SK-N-SH (cell line): ENCODE measurements at regions of chr4 and their contacts with region 1.

Region 1: DNA sequence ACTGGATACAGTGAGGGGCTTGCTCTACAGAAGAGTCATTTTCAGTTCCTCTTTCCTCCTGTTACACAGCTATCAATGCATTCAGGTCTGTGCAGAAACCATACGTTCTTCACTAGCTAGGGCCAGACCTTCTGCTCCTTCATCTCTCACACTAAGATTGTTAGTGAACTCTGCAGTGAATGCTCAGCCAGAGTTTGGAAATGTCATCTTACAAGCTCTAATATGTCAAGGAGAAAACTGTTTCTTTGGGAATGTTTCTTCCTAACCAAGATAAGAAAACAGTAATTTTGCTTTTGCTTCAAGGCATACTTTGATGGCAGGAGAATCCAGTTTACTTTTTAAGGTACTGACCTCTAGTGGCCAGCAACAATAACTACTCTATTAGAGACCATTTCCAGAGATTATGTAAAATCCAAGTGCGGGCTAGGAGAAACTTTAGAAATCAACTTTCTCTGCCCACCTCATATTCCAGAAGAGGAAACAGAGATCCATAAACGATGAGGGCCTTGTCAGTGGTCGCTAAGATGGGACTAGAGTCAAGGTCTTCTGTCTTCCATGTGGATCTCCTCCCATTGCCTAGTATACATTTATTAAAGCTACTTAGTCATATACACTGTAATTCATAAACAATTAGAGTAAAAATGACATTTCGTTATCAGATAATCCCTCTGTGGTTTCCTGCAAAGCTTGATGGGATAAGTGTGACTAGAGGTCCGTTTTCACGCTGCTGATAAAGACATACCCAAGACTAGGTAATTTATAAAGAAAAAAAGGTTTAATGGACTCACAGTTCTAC is 12.1 kb upstream of the CC2D2A start:
- DNase-seq: peak; percentile 32
- H3K4me3 ChIP-seq: no peak overlapping the region; a peak in 1 of 4 replicates
- H3K27ac ChIP-seq: peak overlapping the region in 1 of 2 experiments; percentile 17; a peak in 1 of 4 replicates
- H3K4me1 ChIP-seq: peaks cover 3 to 4% of the 10 kb centered on the region in 2 experiments; a peak in 2 of 4 replicates
- H3K27me3 ChIP-seq: no peaks in the 10 kb centered on the region
- CTCF ChIP-seq: peak; percentile 83
- EP300 ChIP-seq: no peak
- RAD21 ChIP-seq: peak; percentile 89

Region 2: GRCh38 chr4:13654158-13654797 is 1803.3 kb before region 1 on chr4:
- CTCF ChIA-PET with region 1: interaction called, 13 read pairs
- POLR2A ChIA-PET with region 1: no interaction called
- DNase-seq: peak; percentile 62
- H3K4me3 ChIP-seq: peak overlapping the region; percentile 46 to 60
- H3K27ac ChIP-seq: peak overlapping the region in 1 of 2 experiments; percentile 14; a peak in 2 of 4 replicates
- H3K4me1 ChIP-seq: peaks cover 0 to 4% of the 10 kb centered on the region in 2 experiments; a peak in 1 of 4 replicates
- H3K27me3 ChIP-seq: no peaks in the 10 kb centered on the region; the same call in 1 of the 2 replicates
- CTCF ChIP-seq: peak; percentile 71
- EP300 ChIP-seq: no peak
- RAD21 ChIP-seq: peak; percentile 66

Region 3: GRCh38 chr4:15238720-15239119 is 218.9 kb before region 1 on chr4:
- CTCF ChIA-PET with region 1: interaction called, 61 read pairs
- POLR2A ChIA-PET with region 1: no interaction called
- DNase-seq: peak; percentile 65
- H3K4me3 ChIP-seq: no peak overlapping the region
- H3K27ac ChIP-seq: no peak overlapping the region
- H3K4me1 ChIP-seq: peaks cover 2 to 25% of the 10 kb centered on the region in 2 experiments; a peak in 3 of 4 replicates
- H3K27me3 ChIP-seq: no peaks in the 10 kb centered on the region
- CTCF ChIP-seq: peak; percentile 67
- EP300 ChIP-seq: no peak
- RAD21 ChIP-seq: peak; percentile 90

Region 4: DNA sequence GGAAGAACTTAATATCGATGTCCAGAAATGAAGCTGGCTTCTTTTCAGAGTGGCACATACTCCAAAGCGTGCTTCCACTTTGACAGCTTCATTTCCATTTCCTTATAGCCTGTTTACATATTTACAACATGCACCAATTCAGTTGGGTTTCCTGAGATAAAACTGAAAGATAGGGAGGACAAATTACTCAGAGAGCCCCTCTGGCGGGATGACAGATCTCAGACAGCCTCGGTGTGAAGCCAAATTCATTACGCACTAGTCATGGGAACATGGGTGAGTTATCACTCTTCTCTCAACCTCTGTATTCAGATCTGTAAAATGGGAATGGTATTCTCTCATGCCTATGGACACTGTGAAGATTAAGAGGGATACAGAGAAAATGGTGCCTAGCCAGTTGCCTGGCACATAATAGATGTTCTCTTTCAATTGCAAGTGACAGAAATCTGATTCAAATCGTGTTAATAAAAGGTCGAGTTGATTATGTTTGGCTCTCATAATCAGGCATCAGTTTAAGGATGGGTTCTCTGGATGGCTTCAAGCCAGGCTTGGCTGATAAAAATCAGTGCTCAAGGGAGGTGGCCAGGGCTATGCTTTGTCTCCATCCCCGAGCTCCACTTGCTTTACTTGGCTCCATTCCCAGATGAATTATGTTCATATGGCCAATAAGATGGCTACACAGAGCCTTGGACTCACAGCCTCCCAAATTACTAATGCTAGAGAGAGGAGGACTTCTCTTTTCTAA is 162.0 kb before region 1 on chr4:
- CTCF ChIA-PET with region 1: interaction called, 17 read pairs
- POLR2A ChIA-PET with region 1: no interaction called
- DNase-seq: peak; percentile 51
- H3K4me3 ChIP-seq: no peak overlapping the region
- H3K27ac ChIP-seq: peak overlapping the region in 1 of 2 experiments; percentile 75; a peak in 2 of 4 replicates
- H3K4me1 ChIP-seq: peaks cover 23% of the 10 kb centered on the region in 2 experiments; a peak in 3 of 4 replicates
- H3K27me3 ChIP-seq: no peaks in the 10 kb centered on the region
- CTCF ChIP-seq: no peak
- EP300 ChIP-seq: peak; percentile 43 to 92; a peak in 3 of 4 replicates
- RAD21 ChIP-seq: peak; percentile 27; the same call in 1 of the 2 replicates

Region 5: GRCh38 chr4:15427161-15427560 is 30.4 kb before region 1 on chr4:
- CTCF ChIA-PET with region 1: interaction called, 11 read pairs
- POLR2A ChIA-PET with region 1: no interaction called
- DNase-seq: no peak
- H3K4me3 ChIP-seq: no peak overlapping the region
- H3K27ac ChIP-seq: no peak overlapping the region
- H3K4me1 ChIP-seq: no peaks in the 10 kb centered on the region
- H3K27me3 ChIP-seq: no peaks in the 10 kb centered on the region
- CTCF ChIP-seq: no peak
- EP300 ChIP-seq: no peak
- RAD21 ChIP-seq: no peak

Region 6: GRCh38 chr4:15469402-15470127 is 12.0 kb after region 1 on chr4 and contains the start of gene CC2D2A:
- CTCF ChIA-PET with region 1: interaction called, 61 read pairs
- POLR2A ChIA-PET with region 1: no interaction called
- DNase-seq: peak; percentile 42
- H3K4me3 ChIP-seq: peak within 1 kb of the TSS; percentile 61 to 82
- H3K27ac ChIP-seq: peak within 1 kb of the TSS; percentile 63 to 76
- H3K4me1 ChIP-seq: peaks cover 0 to 4% of the 10 kb centered on the region in 2 experiments; a peak in 1 of 4 replicates
- H3K27me3 ChIP-seq: no peaks in the 10 kb centered on the region
- CTCF ChIP-seq: no peak
- EP300 ChIP-seq: no peak
- RAD21 ChIP-seq: no peak
- polyA plus RNA-seq, gene CC2D2A: 17.8 and 23.4 TPM in 2 replicates

Region 7: DNA sequence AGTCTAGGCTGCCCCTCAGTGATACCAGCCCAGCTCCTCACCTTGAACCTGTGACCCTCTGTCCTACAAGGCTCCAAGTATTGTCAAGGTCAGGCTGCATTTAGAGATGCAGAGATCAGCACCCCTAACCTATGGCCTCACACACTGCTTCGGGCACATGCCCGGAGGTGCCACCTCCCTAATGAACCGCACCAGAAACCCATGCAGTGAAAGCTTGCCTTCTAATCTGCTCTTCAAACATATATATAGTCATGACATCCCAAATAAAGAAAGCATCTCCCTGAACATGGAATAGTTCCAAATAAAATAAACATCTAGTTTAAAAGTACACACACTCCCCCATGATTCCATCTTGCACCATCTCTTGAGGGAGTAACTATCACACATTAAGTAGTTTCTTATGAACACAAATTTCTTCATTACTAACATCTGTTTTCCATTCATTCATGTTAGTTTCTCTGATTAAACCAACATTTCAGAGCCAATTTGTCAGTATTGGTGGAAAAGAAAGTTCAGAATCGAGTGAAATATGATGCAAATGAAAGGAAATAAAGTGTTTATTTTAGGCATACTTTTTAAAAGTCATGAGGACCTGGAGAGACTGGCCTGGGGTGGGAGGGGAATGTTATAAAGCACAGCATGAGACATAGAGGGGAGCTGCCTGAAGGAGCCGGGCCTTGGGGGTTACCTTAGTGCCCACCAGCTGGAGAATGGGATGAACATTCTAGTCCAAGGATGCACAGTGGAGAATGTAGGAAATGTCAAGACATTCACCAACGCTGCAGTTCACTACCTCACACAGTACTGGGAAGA is 31.3 kb after region 1 on chr4:
- CTCF ChIA-PET with region 1: no interaction called
- POLR2A ChIA-PET with region 1: no interaction called
- DNase-seq: no peak
- H3K4me3 ChIP-seq: no peak overlapping the region
- H3K27ac ChIP-seq: no peak overlapping the region
- H3K4me1 ChIP-seq: no peaks in the 10 kb centered on the region
- H3K27me3 ChIP-seq: no peaks in the 10 kb centered on the region
- CTCF ChIP-seq: no peak
- EP300 ChIP-seq: no peak
- RAD21 ChIP-seq: no peak

Region 8: GRCh38 chr4:15507679-15508078 is 50.1 kb after region 1 on chr4:
- CTCF ChIA-PET with region 1: no interaction called
- POLR2A ChIA-PET with region 1: no interaction called
- DNase-seq: no peak
- H3K4me3 ChIP-seq: no peak overlapping the region
- H3K27ac ChIP-seq: no peak overlapping the region
- H3K4me1 ChIP-seq: no peaks in the 10 kb centered on the region
- H3K27me3 ChIP-seq: no peaks in the 10 kb centered on the region
- CTCF ChIP-seq: no peak
- EP300 ChIP-seq: no peak
- RAD21 ChIP-seq: no peak